CD8-positive, alpha-beta T cell (primary cell): ENCODE measurements at regions of chr11 and their contacts with region 1.

Region 1: DNA sequence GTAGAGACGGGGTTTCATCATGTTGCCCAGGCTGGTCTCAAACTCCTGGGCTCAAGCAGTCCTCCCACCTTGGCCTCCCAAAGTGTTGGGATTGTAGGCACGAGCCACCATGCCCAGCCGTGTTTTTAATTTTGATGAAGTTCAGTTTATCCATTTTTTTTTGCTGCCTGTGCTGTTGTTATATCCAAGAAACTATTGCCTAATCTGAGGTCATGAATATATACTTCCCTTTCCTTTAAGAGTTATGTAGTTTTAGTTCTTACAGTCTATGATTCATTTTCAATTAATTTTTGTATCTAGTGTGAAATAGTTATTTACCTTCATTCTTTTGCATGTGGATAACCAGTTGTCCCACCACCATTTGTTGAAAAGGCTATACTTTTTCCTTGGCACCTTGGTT is 50.3 kb upstream of the SORL1-AS1 start:
- DNase-seq: no peak
- ATAC-seq: no peak
- H3K4me3 ChIP-seq: no peak overlapping the region
- H3K4me3 Mint-ChIP-seq: no peak overlapping the region
- H3K27ac ChIP-seq: no peak overlapping the region
- H3K27ac Mint-ChIP-seq: no peak overlapping the region
- H3K4me1 ChIP-seq: peaks cover 7% of the 10 kb centered on the region
- H3K4me1 Mint-ChIP-seq: peaks cover 45% of the 10 kb centered on the region
- H3K27me3 ChIP-seq: no peaks in the 10 kb centered on the region
- H3K27me3 Mint-ChIP-seq: no peaks in the 10 kb centered on the region
- CTCF ChIP-seq: no peak

Region 2: GRCh38 chr11:121417055-121417551 is 85.9 kb before region 1 on chr11:
- CTCF ChIA-PET with region 1: no interaction called
- POLR2A ChIA-PET with region 1: no interaction called
- intact Hi-C with region 1: no loop called
- DNase-seq: peak; percentile 18 to 73 (median 49)
- ATAC-seq: peak; percentile 30
- H3K4me3 ChIP-seq: no peak overlapping the region
- H3K4me3 Mint-ChIP-seq: peak overlapping the region; percentile 38
- H3K27ac ChIP-seq: peak overlapping the region; percentile 33 to 61
- H3K27ac Mint-ChIP-seq: peak overlapping the region; percentile 87
- H3K4me1 ChIP-seq: peaks cover 57% of the 10 kb centered on the region
- H3K4me1 Mint-ChIP-seq: peaks cover 58% of the 10 kb centered on the region
- H3K27me3 ChIP-seq: no peaks in the 10 kb centered on the region
- H3K27me3 Mint-ChIP-seq: no peaks in the 10 kb centered on the region
- CTCF ChIP-seq: no peak

Region 3: DNA sequence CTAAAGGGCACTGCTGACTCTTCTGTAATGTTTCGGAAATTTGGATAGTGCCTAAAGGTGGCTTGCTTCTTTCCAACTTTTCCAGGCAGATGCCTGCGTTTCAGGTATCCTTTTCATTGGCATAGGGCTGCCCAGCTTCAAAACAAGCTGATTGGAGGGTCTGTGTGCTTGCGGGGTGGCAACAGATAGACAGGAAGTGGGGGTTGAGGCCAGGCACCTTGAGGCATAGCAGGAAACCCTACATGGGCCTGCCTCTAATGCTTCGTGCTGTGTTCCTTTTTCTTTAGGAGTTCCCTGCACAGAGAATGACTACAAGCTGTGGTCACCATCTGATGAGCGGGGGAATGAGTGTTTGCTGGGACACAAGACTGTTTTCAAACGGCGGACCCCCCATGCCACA is 41.9 kb after region 1 on chr11:
- CTCF ChIA-PET with region 1: no interaction called
- POLR2A ChIA-PET with region 1: no interaction called
- intact Hi-C with region 1: loop called in 1 of 2 experiments (anchors 5 kb)
- DNase-seq: peak in 8 of 9 experiments; percentile 13 to 65 (median 34)
- ATAC-seq: peak; percentile 90
- H3K4me3 ChIP-seq: no peak overlapping the region
- H3K4me3 Mint-ChIP-seq: peak overlapping the region; percentile 49
- H3K27ac ChIP-seq: peak overlapping the region in 1 of 2 experiments; percentile 47
- H3K27ac Mint-ChIP-seq: peak overlapping the region; percentile 93
- H3K4me1 ChIP-seq: peaks cover 39% of the 10 kb centered on the region
- H3K4me1 Mint-ChIP-seq: peaks cover 54% of the 10 kb centered on the region
- H3K27me3 ChIP-seq: no peaks in the 10 kb centered on the region
- H3K27me3 Mint-ChIP-seq: no peaks in the 10 kb centered on the region
- CTCF ChIP-seq: no peak

Region 4: DNA sequence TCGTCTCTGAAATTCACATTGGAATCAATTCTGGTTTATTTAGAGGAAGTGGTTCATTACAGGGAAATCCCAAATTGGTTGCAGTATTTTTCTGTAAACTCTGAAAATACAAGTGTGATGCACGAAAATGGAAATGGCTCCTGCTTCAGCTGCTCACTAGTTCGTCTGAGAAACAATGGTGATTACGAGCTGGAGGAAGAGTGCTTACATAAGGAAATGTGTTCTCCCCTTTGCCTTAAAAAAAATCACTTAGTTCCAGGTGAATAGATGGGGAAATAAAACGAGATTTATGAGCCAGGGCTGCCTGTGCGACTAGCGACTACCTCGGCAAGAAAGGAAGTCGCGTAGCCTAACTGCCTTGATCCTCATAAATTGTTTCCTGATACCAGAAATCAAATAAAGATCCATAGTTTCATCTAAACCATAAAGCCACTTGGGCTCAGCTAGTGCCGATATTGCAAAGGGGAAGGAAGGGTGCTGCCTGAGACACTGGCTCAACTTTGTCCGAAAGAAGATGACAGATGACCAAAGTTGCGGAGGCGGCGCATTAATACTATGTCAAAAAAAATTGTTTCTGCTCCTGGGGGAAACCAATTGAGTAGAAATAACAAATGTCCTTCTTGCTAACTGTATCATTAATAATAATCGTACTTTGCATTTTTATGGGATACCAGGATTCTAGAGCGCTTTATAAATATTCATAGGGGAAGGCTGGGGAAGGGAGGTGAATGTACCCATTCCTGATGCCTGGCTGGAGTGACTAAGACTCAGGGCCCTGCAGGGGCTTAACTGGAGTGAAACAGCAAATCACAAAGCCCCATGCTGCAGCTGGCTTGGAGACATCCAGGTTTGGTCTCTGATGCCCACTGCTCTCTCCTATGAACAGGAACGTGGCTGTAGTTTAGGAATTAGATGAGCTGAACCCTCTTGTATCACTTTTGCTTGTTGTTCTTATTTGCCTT is 427.2 kb after region 1 on chr11:
- CTCF ChIA-PET with region 1: no interaction called
- POLR2A ChIA-PET with region 1: no interaction called
- intact Hi-C with region 1: no loop called
- DNase-seq: peak in 1 of 9 experiments; percentile 2
- ATAC-seq: no peak
- H3K4me3 ChIP-seq: no peak overlapping the region
- H3K4me3 Mint-ChIP-seq: no peak overlapping the region
- H3K27ac ChIP-seq: no peak overlapping the region
- H3K27ac Mint-ChIP-seq: no peak overlapping the region
- H3K4me1 ChIP-seq: no peaks in the 10 kb centered on the region
- H3K4me1 Mint-ChIP-seq: no peaks in the 10 kb centered on the region
- H3K27me3 ChIP-seq: no peaks in the 10 kb centered on the region
- H3K27me3 Mint-ChIP-seq: peaks cover 15% of the 10 kb centered on the region
- CTCF ChIP-seq: no peak